ENCODE measurements at regions of chr20 and their contacts with region 1.

Region 1: GRCh38 chr20:49415005-49415667 is 67.3 kb downstream of the KCNB1 start:
- DNase-seq: peak; percentile 95
- H3K4me3 ChIP-seq: no peak overlapping the region
- H3K27ac ChIP-seq: peak overlapping the region; percentile 81 to 97 (median 90)
- H3K4me1 ChIP-seq: peaks cover 0 to 98% (median 92%) of the 10 kb centered on the region in 4 donors
- H3K27me3 ChIP-seq: no peaks in the 10 kb centered on the region
- CTCF ChIP-seq: no peak
- EP300 ChIP-seq: peak; percentile 82 to 97 (median 93)
- POLR2A ChIP-seq: no peak

Region 2: DNA sequence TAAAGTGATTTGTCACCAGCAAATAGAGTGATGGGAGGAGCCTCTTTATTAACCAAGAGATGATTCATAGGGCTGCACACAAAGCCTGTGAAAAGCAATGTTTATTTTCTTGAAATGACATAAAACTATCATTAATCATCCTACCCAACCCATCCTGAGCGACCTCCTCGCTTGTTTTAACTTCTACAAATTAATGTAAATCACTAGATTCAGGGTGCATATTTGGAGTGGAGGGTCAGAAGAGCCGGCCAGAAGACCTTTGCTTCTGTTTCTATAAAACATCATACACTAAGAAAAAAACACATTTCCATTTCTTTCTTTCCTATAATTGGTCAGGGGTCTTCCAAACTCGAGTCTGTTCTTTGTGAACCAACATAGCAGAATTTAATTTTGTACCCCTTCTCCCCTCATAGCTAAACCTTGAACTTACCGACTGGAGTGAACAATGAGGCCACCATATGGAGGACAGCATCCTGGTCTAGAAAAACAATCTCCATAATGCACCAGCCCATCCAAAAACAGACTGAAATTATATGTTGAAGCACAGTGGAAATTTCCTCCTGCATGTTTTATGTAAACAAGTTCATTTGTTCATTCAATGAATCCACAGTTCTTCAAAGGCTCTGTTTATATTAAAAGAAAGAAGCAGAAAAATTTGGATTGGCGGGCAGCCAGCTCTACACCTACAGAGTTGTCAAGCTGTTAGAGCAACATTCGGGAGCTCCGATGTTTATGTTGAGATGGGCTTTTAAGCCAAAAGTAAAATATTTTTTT is 1234.8 kb before region 1 on chr20:
- intact Hi-C with region 1: no loop called
- DNase-seq: no peak
- H3K4me3 ChIP-seq: no peak overlapping the region
- H3K27ac ChIP-seq: peak overlapping the region in 1 of 4 donors; percentile 4
- H3K4me1 ChIP-seq: peaks cover 0 to 33% (median 8%) of the 10 kb centered on the region in 4 donors
- H3K27me3 ChIP-seq: no peaks in the 10 kb centered on the region
- CTCF ChIP-seq: no peak
- EP300 ChIP-seq: no peak
- POLR2A ChIP-seq: no peak

Region 3: DNA sequence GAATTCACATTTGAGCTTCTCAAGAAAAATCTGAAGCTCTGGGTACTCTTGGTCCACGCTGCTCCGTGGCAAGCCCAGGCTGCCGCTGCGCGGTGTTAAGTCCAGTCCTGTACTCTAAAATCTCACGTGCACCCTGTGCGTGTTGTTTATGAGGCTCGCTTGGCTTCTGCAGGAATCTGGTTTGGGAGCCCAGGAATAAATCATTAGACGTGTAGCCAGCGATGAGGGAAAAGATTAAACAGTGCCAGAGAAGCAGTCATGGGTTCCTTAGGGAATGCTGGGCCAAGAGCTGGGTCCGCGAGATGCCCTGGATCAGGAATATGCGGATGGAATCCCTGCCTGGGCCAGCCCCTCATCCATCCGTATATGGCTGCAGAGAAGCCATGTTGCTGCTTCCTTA is 20.0 kb before region 1 on chr20:
- intact Hi-C with region 1: loop called (anchors 1 kb)
- DNase-seq: peak; percentile 96
- H3K4me3 ChIP-seq: peak overlapping the region in 3 of 4 donors; percentile 14 to 26 (median 20)
- H3K27ac ChIP-seq: peak overlapping the region; percentile 89 to 97 (median 92)
- H3K4me1 ChIP-seq: peaks cover 0 to 75% (median 65%) of the 10 kb centered on the region in 4 donors
- H3K27me3 ChIP-seq: no peaks in the 10 kb centered on the region
- CTCF ChIP-seq: no peak
- EP300 ChIP-seq: peak; percentile 88 to 98 (median 94)
- POLR2A ChIP-seq: peak; percentile 19 to 48

Region 4: DNA sequence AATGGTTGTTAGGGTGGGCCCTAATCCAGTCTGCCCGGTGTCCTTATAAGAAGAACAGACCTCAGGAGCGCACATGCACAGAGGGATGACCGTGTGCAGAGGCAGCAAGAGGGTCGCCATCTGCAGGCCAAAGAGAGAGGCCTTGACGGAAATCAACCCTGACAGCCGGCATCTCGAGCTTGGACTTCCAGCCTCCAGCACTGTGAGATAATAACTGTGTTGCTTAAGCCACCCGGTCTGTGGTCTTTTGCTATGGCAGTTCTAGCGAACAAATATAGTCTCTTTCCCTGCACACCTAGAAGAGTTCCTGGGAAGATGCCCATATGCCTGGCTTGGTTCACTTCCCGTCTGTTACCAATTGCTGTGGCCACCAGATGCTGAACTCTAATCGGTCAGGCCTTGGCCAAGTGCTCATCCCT is 188.1 kb after region 1 on chr20:
- intact Hi-C with region 1: no loop called
- DNase-seq: no peak
- H3K4me3 ChIP-seq: no peak overlapping the region
- H3K27ac ChIP-seq: peak overlapping the region in 1 of 4 donors; percentile 57
- H3K4me1 ChIP-seq: peaks cover 0 to 21% (median 11%) of the 10 kb centered on the region in 4 donors
- H3K27me3 ChIP-seq: peaks cover 0 to 3% (median 0%) of the 10 kb centered on the region in 3 donors
- CTCF ChIP-seq: no peak
- EP300 ChIP-seq: no peak
- POLR2A ChIP-seq: no peak

Region 5: GRCh38 chr20:50054626-50055511 is 639.7 kb after region 1 on chr20:
- intact Hi-C with region 1: no loop called
- DNase-seq: no peak
- H3K4me3 ChIP-seq: no peak overlapping the region
- H3K27ac ChIP-seq: peak overlapping the region in 2 of 4 donors; percentile 19 to 31
- H3K4me1 ChIP-seq: peaks cover 0 to 18% (median 10%) of the 10 kb centered on the region in 4 donors
- H3K27me3 ChIP-seq: no peaks in the 10 kb centered on the region
- CTCF ChIP-seq: no peak
- EP300 ChIP-seq: no peak
- POLR2A ChIP-seq: no peak

Measured in sigmoid colon (tissue), 7 donors.